Endothelial cell of umbilical vein (primary cell): ENCODE measurements at regions of chr10 and their contacts with region 1.

Region 1: DNA sequence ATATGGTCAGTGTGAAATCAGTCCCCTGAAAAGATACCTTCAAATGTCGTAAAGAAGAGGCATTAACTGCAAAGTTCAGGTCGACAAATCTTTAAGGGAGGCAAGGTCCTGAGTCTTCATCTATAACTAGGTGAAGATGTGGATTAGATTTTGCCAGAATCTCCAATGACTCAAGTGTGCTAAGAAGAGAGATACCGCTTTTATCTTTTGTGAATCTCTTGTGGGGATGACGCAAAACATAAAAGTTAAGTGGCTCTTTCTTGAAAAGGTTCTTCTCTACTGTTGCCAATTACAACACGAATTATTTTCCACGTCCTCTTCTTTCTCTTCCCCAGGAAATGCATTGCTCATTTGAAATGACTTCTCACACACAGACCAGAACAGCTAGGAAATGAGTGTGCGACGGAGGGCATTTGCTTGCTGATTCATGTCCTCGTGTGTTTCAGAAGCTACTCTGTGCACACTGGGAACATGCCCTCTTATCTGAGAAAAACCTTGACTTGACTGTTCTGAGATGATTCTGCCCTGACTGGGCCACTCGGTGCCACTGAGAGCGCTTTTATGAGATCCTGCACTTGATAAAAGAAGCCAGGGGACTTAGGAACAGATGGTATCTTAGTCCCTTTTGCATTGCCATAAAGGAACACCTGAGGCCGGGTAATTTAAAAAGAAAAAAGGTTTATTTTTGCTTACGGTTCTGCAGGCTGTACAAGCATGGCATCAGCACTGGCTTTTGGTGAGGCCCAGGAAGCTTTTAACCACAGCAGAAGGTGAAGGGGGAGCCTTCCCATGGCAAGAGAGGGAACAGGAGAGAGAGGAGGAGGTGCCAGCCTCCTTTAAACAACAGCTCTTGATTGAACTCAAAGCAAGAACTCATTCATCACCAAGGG is 169.5 kb upstream of the PFKP start:
- DNase-seq: peak; percentile 94
- H3K4me3 ChIP-seq: no peak overlapping the region
- H3K27ac ChIP-seq: peak overlapping the region; percentile 81
- H3K4me1 ChIP-seq: peaks cover 15% of the 10 kb centered on the region
- H3K27me3 ChIP-seq: no peaks in the 10 kb centered on the region
- CTCF ChIP-seq: no peak
- POLR2A ChIP-seq: no peak

Region 2: GRCh38 chr10:2913474-2913873 is 15.6 kb after region 1 on chr10:
- CTCF ChIA-PET with region 1: interaction called, 4 read pairs
- POLR2A ChIA-PET with region 1: no interaction called
- dilution Hi-C with region 1: no loop called
- intact Hi-C with region 1: loop called (anchors 1 kb)
- DNase-seq: no peak
- H3K4me3 ChIP-seq: no peak overlapping the region
- H3K27ac ChIP-seq: no peak overlapping the region
- H3K4me1 ChIP-seq: peaks cover 5% of the 10 kb centered on the region
- H3K27me3 ChIP-seq: peaks cover 0 to 2% of the 10 kb centered on the region in 2 experiments
- CTCF ChIP-seq: no peak
- POLR2A ChIP-seq: no peak

Region 3: DNA sequence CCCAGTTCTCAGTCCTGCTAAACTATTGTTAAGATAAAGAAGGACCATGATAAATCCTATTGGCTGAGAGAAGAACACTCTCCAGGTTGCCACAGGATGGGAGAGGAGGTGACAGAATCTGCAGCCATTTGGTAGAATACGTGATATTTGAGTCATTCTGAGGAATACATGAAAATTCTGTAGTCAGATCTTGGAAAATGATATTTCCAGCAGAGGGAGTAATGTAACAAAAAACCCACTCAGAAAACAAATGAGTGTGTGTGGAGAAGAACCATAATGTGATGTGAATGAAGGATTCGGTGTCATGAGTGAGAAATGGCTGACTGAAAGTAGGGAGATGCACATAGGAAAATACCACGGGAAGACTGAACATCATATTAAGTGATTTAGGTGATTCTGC is 41.0 kb after region 1 on chr10:
- CTCF ChIA-PET with region 1: no interaction called
- POLR2A ChIA-PET with region 1: no interaction called
- dilution Hi-C with region 1: no loop called
- intact Hi-C with region 1: no loop called
- DNase-seq: peak; percentile 10
- H3K4me3 ChIP-seq: no peak overlapping the region
- H3K27ac ChIP-seq: no peak overlapping the region
- H3K4me1 ChIP-seq: no peaks in the 10 kb centered on the region
- H3K27me3 ChIP-seq: peaks cover 14 to 17% of the 10 kb centered on the region in 2 experiments
- CTCF ChIP-seq: no peak
- POLR2A ChIP-seq: no peak